Activated CD4-positive, alpha-beta memory T cell treated with anti-CD3 and anti-CD28 coated beads, Interleukin-2, amount 10 ng/mL, durations not matched to agents 7 days and 5 days (primary cell): ENCODE measurements at regions of chr9 and their contacts with region 1.

Region 1: DNA sequence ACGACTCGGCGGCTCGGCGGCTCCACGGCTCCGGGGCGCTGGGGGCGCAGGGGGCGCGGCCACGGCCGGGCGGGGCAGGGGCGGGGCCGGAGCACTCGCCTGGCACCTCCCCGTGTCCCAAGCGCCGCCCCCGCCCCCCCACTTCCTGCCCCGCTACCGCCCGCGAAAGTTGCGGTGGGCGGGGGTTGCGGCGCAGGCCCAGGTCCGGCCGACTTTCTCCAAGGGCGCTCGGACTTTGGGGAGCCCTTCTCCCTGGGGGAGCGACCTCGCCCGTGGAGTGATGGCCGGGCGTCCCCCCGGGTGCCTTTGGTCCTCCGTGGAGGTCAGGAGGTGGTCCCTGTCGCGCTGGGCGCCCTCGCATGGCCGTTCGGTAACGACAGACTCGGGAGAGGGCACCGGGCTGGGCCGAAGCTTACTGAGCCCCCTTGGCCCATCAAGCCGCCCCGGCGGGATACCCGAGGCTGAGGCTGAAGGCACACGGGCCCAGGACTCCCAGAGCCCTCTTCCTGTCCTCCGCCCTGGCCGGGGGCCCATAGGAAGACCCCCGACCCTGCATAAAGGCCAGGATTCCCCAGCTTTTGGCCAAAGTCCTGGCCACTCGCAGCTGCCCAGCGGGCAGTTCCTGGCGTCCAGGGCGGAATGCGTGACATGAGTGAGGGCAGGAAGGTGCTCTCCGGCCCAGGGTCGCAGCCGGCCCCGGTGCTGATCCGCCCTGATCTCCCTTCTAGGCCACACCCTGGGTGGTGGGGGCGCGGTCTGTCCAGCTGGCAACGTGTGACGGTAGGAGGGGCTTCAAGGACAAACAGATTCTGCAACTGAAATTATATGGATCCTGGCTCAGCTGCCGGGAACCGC is 883 bp upstream of the VAV2 start:
- DNase-seq: peak; percentile 72
- H3K4me3 Mint-ChIP-seq: peak overlapping the region; percentile 59
- H3K27ac Mint-ChIP-seq: no peak overlapping the region
- H3K4me1 Mint-ChIP-seq: peaks cover 1% of the 10 kb centered on the region
- H3K27me3 Mint-ChIP-seq: peaks cover 17% of the 10 kb centered on the region

Region 2: GRCh38 chr9:133792721-133793470 is 200.1 kb before region 1 on chr9:
- CTCF ChIA-PET with region 1: interaction called, 29 read pairs
- POLR2A ChIA-PET with region 1: no interaction called
- DNase-seq: peak; percentile 48
- H3K4me3 Mint-ChIP-seq: no peak overlapping the region
- H3K27ac Mint-ChIP-seq: no peak overlapping the region
- H3K4me1 Mint-ChIP-seq: no peaks in the 10 kb centered on the region
- H3K27me3 Mint-ChIP-seq: no peaks in the 10 kb centered on the region

Region 3: GRCh38 chr9:133945314-133945975 is 47.6 kb before region 1 on chr9:
- CTCF ChIA-PET with region 1: no interaction called
- POLR2A ChIA-PET with region 1: no interaction called
- DNase-seq: no peak
- H3K4me3 Mint-ChIP-seq: no peak overlapping the region
- H3K27ac Mint-ChIP-seq: no peak overlapping the region
- H3K4me1 Mint-ChIP-seq: no peaks in the 10 kb centered on the region
- H3K27me3 Mint-ChIP-seq: no peaks in the 10 kb centered on the region

Region 4: GRCh38 chr9:134007150-134007549 is 14.1 kb after region 1 on chr9:
- CTCF ChIA-PET with region 1: interaction called, 12 read pairs
- POLR2A ChIA-PET with region 1: no interaction called
- DNase-seq: no peak
- H3K4me3 Mint-ChIP-seq: no peak overlapping the region
- H3K27ac Mint-ChIP-seq: no peak overlapping the region
- H3K4me1 Mint-ChIP-seq: no peaks in the 10 kb centered on the region
- H3K27me3 Mint-ChIP-seq: peaks cover 2% of the 10 kb centered on the region

Region 5: GRCh38 chr9:134283111-134283515 is 290.1 kb after region 1 on chr9:
- CTCF ChIA-PET with region 1: no interaction called
- POLR2A ChIA-PET with region 1: no interaction called
- DNase-seq: no peak
- H3K4me3 Mint-ChIP-seq: no peak overlapping the region
- H3K27ac Mint-ChIP-seq: no peak overlapping the region
- H3K4me1 Mint-ChIP-seq: no peaks in the 10 kb centered on the region
- H3K27me3 Mint-ChIP-seq: peaks cover 2% of the 10 kb centered on the region